Activated CD4-positive, alpha-beta memory T cell treated with anti-CD3 and anti-CD28 coated beads, Interleukin-2, amount 10 ng/mL, durations not matched to agents 7 days and 5 days (primary cell): ENCODE measurements at regions of chr7 and their contacts with region 1.

Region 1: DNA sequence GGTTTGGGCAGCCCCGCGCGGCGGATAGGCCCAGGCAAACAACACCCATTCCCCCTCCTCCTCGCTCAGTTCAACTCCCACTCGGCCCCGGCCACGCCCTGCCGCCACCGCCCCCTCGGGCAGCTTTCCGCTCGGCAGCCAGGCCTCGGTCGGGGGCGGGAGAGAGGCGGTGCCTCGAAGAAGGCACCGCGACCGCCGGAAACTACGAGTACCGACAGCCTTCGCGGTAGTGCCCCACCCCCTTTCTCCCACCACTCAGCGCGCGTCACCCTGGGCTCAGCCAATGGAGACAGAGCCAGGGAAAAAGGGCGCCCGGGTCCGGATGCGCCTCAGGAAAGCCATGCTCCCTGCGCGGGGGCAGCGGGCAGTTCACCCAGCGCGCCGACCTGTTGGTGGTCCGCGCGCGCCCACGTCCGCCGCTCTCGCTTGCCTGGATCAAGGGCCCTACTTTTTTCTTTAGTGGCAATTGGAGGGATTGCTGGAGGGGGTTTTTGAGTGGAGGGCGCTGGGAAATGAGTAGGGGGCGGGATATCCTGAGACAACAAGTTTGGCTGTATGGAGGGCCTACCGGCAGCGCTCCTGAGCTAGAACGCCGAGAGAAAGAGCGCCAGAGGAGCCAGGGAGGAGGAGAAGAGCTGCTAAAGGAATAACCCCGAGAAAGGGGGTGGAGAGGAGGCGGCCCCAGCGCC is 557 bp upstream of the SP4 start:
- DNase-seq: peak; percentile 100
- H3K4me3 Mint-ChIP-seq: peak overlapping the region; percentile 98
- H3K27ac Mint-ChIP-seq: peak overlapping the region; percentile 98
- H3K4me1 Mint-ChIP-seq: peaks cover 48% of the 10 kb centered on the region
- H3K27me3 Mint-ChIP-seq: no peaks in the 10 kb centered on the region

Region 2: DNA sequence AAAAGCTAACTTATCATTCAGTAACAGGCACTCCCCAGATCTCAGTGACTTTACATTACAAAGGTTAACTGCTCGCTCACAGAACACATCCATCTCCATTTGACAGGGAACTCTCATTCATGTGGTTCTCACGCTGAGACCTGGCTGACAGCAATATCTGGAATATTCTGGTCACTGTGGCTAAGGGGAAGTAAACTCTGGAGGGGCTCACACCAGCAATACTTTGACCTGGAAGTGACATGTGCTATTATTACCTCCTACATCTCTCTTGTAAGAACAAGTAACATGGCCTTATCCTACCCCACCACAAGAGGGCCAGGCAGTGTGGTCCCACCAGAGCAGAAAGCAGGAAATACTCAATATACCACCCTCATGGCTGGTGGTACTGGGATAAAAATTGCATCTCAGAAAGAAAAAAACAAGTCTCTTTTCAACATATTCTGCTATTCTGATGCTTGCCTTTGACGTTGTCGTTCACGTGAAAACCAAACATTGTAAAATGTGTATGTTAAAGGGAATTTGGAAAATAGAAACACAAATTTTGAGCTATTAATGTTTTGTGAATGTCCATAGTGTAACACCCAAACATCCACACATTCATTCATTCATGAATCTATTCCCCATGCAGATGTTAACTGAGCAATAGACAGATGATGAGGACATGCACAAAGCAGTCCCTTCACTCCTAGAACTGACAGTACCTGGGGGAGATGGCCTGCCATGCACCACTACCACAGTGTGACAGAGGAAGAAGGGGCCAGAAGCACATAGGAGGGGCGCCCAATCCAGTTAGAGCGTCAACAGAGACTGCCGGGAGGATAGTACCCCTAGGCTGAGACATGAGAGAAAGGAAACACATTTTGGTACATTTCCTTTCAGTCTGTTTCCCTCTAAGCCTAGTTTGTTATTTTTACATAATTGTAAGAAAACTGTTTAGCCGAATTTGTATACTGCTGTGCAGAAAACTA is 165.4 kb before region 1 on chr7:
- CTCF ChIA-PET with region 1: interaction called, 10 read pairs
- POLR2A ChIA-PET with region 1: interaction called, 4 read pairs
- DNase-seq: peak; percentile 59
- H3K4me3 Mint-ChIP-seq: no peak overlapping the region
- H3K27ac Mint-ChIP-seq: no peak overlapping the region
- H3K4me1 Mint-ChIP-seq: peaks cover 15% of the 10 kb centered on the region
- H3K27me3 Mint-ChIP-seq: peaks cover 3% of the 10 kb centered on the region

Region 3: DNA sequence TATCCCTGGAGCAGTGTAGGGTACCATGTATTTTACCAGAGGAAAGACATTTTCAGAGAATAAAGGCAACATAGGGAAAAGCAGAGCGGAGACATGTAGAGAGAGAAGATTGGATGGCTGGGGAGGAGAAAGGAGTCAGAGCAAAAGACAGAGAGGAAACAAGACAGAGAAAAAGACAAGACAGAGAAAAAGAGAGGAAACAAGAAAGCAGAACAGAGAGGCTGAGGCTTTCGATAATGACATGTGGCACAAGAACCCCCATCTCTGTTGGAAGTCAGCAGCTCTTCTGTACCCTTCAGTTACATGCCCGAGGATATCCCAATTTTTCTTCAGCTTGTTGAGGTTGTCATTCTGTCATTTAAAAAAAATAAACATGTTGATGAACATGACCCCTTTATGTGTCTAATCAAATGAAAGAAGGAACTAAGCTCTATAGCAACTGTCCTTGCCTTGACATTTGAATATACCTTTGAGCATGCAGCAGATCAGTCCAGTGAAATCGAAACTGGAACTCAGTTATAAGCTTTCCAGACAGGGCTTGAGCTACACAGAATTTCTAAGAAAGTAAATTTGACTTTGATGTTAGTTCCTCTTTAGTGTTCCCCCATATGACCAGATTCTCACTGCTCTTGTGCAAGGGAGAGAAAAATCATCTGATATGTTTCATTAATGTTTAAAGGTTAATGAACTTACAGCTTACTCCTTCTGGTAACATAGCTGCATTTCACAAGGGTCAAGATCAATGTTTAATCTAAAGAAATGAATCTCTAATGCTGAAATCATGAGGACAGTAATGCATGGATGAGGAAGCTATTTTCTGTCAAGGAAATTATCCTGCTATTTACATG is 74.6 kb before region 1 on chr7:
- CTCF ChIA-PET with region 1: interaction called, 9 read pairs
- POLR2A ChIA-PET with region 1: interaction called, 82 read pairs
- DNase-seq: no peak
- H3K4me3 Mint-ChIP-seq: peak overlapping the region; percentile 67
- H3K27ac Mint-ChIP-seq: peak overlapping the region; percentile 98
- H3K4me1 Mint-ChIP-seq: peaks cover 69% of the 10 kb centered on the region
- H3K27me3 Mint-ChIP-seq: no peaks in the 10 kb centered on the region

Region 4: DNA sequence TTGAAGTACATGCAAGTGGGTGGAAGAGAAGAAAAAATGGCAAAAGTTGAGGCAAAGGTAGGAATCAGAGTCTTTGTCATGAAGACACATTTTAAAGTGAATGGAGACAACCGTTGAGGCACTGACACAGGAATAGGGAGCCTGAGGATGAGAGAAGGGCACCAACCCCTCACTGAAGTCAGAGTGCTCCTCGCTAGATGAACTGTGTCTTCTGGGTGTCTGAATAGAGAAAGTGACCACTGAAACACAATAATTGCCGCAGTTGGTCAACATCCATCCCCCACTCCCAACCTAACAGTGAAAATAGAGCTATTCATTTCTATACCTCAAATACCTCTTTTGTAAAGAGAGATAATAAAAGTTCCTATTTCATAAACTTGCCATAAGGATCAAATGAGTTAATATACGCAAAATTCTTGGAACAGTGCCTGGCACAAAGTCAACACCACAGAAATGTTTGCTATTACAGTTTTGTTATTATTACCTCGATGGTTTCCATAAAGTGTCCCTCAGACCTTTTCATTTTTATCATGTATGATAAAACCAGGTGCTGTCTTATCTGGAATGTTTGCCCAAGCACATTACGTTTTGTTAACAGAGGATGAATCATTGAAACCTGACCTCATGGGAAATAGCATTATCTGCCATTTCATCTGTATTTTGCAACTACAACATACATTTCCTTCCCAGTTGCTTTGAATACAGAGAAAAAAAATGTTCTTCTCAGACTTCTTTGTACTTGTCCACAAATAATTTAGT is 61.3 kb before region 1 on chr7:
- CTCF ChIA-PET with region 1: no interaction called
- POLR2A ChIA-PET with region 1: interaction called, 17 read pairs
- DNase-seq: no peak
- H3K4me3 Mint-ChIP-seq: no peak overlapping the region
- H3K27ac Mint-ChIP-seq: peak overlapping the region; percentile 71
- H3K4me1 Mint-ChIP-seq: peaks cover 65% of the 10 kb centered on the region
- H3K27me3 Mint-ChIP-seq: no peaks in the 10 kb centered on the region

Region 5: GRCh38 chr7:21412410-21412851 is 14.9 kb before region 1 on chr7:
- CTCF ChIA-PET with region 1: interaction called, 4 read pairs
- POLR2A ChIA-PET with region 1: interaction called, 48 read pairs
- DNase-seq: no peak
- H3K4me3 Mint-ChIP-seq: no peak overlapping the region
- H3K27ac Mint-ChIP-seq: peak overlapping the region; percentile 75
- H3K4me1 Mint-ChIP-seq: peaks cover 36% of the 10 kb centered on the region
- H3K27me3 Mint-ChIP-seq: peaks cover 7% of the 10 kb centered on the region

Region 6: DNA sequence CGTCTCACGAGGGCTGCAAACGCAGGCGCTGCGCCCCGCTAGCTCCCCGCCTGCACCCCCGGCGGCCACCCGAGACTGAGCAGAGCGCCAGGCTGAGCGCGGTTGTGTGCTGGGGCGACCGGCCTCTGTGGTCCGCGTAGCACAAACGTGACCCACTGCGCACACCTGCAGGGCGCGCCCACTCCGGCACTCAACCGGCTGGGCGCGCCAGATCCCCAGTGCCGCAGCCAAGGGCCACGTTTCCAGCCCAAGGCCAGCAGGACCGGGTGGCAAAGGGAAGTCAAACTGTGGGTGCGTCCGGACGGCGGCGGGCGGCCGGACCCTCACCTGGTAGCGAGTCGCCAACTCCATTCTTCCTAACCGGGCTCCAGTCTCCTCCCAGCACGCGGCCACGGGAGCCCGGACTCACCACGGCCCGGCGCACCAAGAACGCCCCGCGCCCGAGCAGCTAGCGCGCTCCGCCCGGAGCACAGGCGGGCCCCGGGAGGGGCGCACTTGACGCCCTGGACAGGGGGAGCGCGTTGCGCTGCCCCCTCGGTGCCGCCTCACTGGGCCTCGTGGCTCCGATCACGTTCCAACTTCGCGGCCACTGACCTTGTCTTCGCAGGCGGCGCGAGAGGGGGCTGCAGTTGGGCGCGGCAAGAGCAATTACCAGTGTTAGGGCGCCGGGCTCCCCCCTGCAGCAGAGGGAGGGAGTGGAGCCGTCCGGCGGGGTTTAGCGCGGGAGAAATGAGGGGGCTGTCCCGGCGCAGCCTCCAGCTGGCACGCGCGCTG is 518.3 kb after region 1 on chr7 and contains the start of gene CDCA7L:
- CTCF ChIA-PET with region 1: interaction called, 4 read pairs
- POLR2A ChIA-PET with region 1: interaction called, 11 read pairs
- DNase-seq: peak; percentile 66
- H3K4me3 Mint-ChIP-seq: peak within 1 kb of the TSS; percentile 83
- H3K27ac Mint-ChIP-seq: peak within 1 kb of the TSS; percentile 79
- H3K4me1 Mint-ChIP-seq: peaks cover 66% of the 10 kb centered on the region
- H3K27me3 Mint-ChIP-seq: peaks cover 9% of the 10 kb centered on the region
- total RNA-seq, gene CDCA7L: 38.8 to 48.2 TPM